ENCODE measurements at regions of chr1 and their contacts with region 1.

Region 1: DNA sequence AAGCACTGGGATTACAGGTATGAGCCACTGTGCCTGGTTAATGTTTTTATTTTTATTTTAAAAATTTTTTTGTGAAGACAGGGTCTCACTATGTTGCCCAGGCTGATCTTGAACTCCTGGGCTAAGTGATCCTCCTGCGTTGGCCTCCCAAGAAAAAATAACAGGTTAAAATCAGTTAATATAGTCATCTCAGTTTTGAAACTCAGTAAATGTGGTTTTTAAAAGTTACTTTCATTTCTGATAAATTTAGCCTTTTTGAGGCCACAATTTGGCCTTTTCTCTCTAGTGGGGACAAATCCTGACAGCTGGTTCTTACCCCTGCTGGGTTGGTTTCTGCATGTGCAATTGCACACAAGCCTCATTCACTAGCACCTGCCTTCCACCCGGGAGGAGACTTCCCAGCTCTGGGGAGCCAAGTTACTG is 13.3 kb downstream of the PMF1 start:
- DNase-seq: no peak

Region 2: DNA sequence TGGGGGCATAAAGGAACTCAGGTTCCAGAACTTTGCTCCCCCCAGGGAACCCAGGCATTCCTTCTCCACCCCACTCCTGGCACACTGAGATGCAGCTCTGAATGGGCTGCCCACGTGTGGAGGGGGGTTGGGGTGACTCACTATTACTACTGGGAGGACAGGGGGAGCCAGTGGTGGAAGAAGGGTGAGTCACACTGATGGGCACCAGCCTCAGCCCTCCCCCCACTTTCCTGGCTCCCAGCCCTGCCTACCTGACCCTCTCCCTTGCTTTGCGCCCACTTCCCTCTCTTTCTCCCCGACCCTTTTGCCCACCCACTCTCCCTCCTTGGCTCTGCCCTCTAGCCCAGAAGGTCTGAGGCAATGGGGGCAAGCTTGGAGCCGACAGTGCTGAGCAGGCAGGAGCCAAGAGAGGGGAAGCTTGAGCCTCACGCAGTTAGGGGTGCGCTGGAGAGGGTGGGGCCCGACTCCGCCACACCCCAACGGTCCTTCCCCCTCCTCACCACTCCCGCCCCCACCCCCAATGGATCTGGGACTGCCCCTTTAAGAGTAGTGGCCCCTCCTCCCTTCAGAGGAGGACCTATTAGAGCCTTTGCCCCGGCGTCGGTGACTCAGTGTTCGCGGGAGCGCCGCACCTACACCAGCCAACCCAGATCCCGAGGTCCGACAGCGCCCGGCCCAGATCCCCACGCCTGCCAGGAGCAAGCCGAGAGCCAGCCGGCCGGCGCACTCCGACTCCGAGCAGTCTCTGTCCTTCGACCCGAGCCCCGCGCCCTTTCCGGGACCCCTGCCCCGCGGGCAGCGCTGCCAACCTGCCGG is 111.8 kb before region 1 on chr1 and contains the start of gene LMNA:
- CTCF ChIA-PET with region 1: no interaction called
- POLR2A ChIA-PET with region 1: no interaction called
- DNase-seq: peak; percentile 87

Region 3: DNA sequence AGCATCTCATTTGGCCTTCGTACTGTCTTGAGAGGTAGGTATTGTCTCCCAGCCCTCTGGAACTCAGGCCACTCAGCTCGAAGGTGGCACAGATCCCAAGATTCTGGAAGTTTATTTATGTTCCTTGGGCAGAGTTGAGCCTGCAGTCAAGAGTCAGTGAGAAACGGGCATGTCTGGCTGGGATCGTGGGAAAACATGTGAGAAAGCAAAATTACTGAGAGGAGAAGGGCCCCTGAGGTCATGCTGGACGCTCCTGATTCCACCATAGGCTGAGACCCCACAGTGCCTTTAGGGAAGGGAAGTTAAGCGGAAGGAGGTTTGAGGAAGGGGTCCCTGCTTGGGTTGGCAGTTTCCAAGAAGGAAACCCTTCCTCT is 85.3 kb before region 1 on chr1:
- CTCF ChIA-PET with region 1: interaction called, 37 read pairs
- POLR2A ChIA-PET with region 1: interaction called, 6 read pairs
- DNase-seq: no peak

Region 4: DNA sequence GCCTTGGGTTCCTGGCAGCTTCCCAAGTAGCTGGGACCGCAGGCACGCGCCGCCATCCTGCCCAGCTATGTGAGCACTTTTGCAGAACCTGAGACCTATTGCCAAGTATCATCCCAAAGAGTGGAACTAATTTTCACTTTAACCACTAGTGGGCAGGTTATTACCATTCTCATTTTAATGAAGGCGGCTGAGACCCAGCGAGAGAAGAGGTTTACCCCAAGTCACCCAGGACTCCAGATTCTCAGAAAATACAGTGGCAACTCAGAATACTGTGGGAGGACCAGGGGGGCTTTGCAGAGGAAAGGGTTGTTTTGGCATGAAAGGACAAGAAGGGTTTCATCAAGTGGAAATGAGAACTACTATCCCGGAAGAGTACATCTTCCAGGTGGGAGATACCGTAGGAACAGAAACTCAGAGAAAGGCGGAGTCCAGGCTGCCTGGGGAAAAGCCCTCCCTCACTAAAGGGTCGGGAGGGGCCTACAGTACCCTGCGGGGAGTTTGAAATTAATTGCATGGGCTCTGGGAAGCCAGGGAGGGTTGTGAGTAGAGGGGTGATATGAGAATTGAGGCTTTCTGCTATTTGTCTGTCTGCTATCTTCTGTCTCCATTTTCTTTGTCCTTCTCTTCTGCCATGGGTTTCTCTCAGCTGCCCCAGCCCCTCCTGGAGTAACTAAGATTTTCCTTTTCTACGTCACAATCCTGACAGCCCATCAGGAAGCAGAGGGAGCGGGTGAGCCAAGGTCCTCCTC is 79.9 kb before region 1 on chr1:
- CTCF ChIA-PET with region 1: interaction called, 37 read pairs
- POLR2A ChIA-PET with region 1: interaction called, 6 read pairs
- DNase-seq: peak; percentile 81

Region 5: GRCh38 chr1:156180471-156180870 is 45.7 kb before region 1 on chr1:
- CTCF ChIA-PET with region 1: no interaction called
- POLR2A ChIA-PET with region 1: no interaction called
- DNase-seq: no peak